IMR-90 (cell line): ENCODE measurements at regions of chr6 and their contacts with region 1.

Region 1: GRCh38 chr6:46848684-46849360 is 55.6 kb downstream of the MEP1A start:
- DNase-seq: peak; percentile 55
- ATAC-seq: peak; percentile 100
- H3K4me3 ChIP-seq: no peak overlapping the region
- H3K27ac ChIP-seq: no peak overlapping the region
- H3K4me1 ChIP-seq: no peaks in the 10 kb centered on the region
- H3K27me3 ChIP-seq: peaks cover 2% of the 10 kb centered on the region; the same call in 1 of the 2 replicates
- CTCF ChIP-seq: peak; percentile 90
- POLR2A ChIP-seq: no peak
- RAD21 ChIP-seq: peak; percentile 83

Region 2: DNA sequence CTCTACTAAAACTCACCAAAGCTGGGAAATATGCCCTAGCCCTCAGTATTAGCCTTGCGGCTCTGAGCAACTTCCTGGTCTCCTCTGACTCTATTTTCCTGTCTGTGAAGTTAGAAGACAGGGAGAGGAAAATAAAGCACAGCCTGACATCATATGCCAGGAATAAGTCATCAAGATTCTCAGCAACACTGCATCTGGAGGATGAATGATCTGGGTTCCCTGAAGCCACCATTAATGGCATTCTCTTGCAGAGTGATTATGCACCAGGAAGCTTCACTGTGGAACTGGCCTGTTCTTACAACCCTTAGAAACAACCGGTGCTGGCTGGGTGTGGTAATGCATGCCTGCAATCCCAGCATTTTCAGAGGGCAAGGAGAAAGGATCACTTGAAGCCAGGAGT is 60.5 kb after region 1 on chr6:
- CTCF ChIA-PET with region 1: no interaction called
- POLR2A ChIA-PET with region 1: no interaction called
- dilution Hi-C with region 1: no loop called
- in situ Hi-C with region 1: no loop called
- intact Hi-C with region 1: no loop called
- DNase-seq: no peak
- ATAC-seq: no peak
- H3K4me3 ChIP-seq: no peak overlapping the region
- H3K27ac ChIP-seq: no peak overlapping the region
- H3K4me1 ChIP-seq: no peaks in the 10 kb centered on the region
- H3K27me3 ChIP-seq: no peaks in the 10 kb centered on the region
- CTCF ChIP-seq: no peak
- POLR2A ChIP-seq: no peak
- RAD21 ChIP-seq: no peak

Region 3: GRCh38 chr6:46993846-46994245 is 145.0 kb after region 1 on chr6:
- CTCF ChIA-PET with region 1: interaction called, 3 read pairs
- POLR2A ChIA-PET with region 1: no interaction called
- dilution Hi-C with region 1: no loop called
- in situ Hi-C with region 1: no loop called
- intact Hi-C with region 1: loop called (anchors 1 kb)
- DNase-seq: peak; percentile 54
- ATAC-seq: no peak
- H3K4me3 ChIP-seq: no peak overlapping the region
- H3K27ac ChIP-seq: no peak overlapping the region
- H3K4me1 ChIP-seq: no peaks in the 10 kb centered on the region
- H3K27me3 ChIP-seq: no peaks in the 10 kb centered on the region; the same call in 1 of the 2 replicates
- CTCF ChIP-seq: no peak
- POLR2A ChIP-seq: no peak
- RAD21 ChIP-seq: no peak

Region 4: DNA sequence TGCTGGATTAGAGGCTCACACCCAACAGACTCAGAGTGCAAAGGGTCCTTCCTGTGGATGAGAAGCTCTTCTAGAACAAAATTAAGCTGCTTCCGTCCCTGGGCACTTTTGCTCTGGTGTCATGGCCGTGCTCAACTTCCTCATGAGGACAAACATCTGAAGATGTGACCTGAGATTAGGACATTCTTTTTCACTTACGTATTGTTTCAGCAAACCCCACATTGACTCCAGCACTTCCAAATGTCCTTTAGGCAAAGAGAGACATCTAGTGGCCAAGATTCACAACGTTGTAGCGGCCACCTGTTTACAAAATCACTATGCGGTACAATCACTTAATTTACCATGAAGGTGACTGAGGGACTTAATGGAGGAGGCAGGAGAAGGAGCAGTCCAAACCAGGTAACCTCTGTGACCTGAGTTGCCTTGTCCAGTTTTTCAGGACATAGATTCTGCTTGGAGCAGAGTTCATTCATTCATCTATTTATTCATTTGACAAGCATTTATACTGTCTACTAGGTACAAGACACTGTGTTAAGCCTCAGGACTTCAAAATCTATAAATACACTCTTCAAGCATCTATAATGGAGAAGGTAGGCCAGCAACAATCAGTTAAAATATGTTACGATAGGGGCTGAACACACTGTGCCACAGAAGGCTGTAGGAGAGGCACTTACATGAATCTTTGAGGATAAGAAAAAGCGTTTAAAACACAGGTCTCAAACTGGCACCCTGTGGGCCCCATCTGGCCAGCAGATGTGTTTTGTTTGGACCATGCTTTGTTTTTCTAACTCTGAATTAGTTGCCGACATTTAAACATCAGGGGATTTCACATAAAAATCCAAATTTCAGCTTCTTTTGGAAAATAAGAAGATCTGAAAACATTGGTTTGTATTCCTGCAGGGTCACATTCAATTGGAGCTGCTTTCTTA is 198.9 kb after region 1 on chr6:
- CTCF ChIA-PET with region 1: interaction called, 11 read pairs
- POLR2A ChIA-PET with region 1: no interaction called
- dilution Hi-C with region 1: no loop called
- in situ Hi-C with region 1: loop called (anchors 10 kb)
- intact Hi-C with region 1: loop called (anchors 1 kb)
- DNase-seq: peak; percentile 62
- ATAC-seq: peak; percentile 89
- H3K4me3 ChIP-seq: no peak overlapping the region
- H3K27ac ChIP-seq: no peak overlapping the region
- H3K4me1 ChIP-seq: no peaks in the 10 kb centered on the region
- H3K27me3 ChIP-seq: no peaks in the 10 kb centered on the region
- CTCF ChIP-seq: peak; percentile 71
- POLR2A ChIP-seq: no peak
- RAD21 ChIP-seq: peak; percentile 66

Region 5: GRCh38 chr6:48213076-48213788 is 1364.4 kb after region 1 on chr6:
- CTCF ChIA-PET with region 1: no interaction called
- POLR2A ChIA-PET with region 1: no interaction called
- dilution Hi-C with region 1: no loop called
- in situ Hi-C with region 1: no loop called
- intact Hi-C with region 1: no loop called
- DNase-seq: no peak
- ATAC-seq: no peak
- H3K4me3 ChIP-seq: no peak overlapping the region
- H3K27ac ChIP-seq: no peak overlapping the region
- H3K4me1 ChIP-seq: no peaks in the 10 kb centered on the region
- H3K27me3 ChIP-seq: no peaks in the 10 kb centered on the region
- CTCF ChIP-seq: no peak
- POLR2A ChIP-seq: no peak
- RAD21 ChIP-seq: no peak